ENCODE measurements at regions of chr7 and their contacts with region 1.

Region 1: DNA sequence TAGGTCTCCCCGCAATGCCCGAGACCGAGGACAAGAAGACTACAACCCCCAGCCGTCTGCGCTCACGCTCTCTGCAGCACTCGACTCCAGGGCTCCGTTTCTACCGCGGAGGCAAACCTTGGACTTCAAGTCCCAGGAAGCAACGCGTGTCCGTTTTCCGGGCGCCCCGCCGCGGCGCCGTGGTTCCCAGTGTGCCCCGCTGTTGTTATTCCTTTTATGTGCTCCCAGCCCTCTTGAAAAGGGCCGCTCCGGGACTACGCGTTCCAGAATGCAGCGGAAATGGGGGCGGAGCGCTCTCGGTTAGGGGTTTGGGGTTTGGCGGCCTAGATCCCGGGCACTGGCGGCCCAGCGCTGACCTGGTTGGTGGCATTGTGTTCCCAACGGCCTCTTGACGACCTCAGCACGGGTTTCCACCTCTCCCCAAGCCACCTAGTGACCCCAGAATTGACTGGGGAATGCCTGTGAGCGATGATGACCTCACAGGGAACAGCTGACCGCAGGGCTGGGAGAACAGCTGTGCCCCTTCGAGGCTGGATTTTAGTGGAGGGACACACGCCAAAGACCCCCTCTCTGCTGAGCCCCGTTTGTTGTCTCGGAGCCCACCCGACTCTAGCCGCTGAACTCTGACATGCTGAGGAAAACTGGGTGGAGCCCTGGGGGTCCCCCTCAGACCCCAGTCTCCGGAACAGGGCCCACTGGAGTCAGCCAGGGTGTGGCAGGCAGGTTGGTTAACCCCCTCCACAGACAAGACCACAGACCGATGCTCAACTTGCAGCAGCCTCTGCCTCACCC is 488 bp upstream of the CDK5 start:
- DNase-seq: peak; percentile 99
- H3K4me3 Mint-ChIP-seq: peak overlapping the region; percentile 99
- H3K27ac Mint-ChIP-seq: peak overlapping the region; percentile 88
- H3K4me1 Mint-ChIP-seq: peaks cover 38% of the 10 kb centered on the region
- H3K27me3 Mint-ChIP-seq: no peaks in the 10 kb centered on the region

Region 2: DNA sequence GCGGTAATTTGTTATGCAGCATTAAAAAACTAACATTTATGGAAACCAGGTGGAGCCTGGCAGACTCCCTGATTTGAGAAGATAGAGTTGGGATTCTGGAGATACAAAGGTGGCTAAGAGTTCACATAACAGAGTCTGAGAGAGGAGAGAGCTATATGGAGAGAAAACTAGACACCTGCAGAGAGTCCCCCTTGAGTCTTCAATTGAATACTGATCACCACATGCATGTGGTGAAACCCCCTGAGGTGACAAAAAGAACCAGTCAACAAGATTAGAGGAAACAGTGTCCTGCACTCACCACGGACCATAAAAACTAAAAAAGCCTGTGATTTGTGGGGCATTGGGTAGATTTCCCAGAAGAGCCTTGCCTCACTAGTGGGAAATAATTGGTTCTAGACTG is 362.5 kb before region 1 on chr7:
- intact Hi-C with region 1: no loop called
- DNase-seq: no peak
- H3K4me3 Mint-ChIP-seq: no peak overlapping the region
- H3K27ac Mint-ChIP-seq: no peak overlapping the region
- H3K4me1 Mint-ChIP-seq: peaks cover 14% of the 10 kb centered on the region
- H3K27me3 Mint-ChIP-seq: no peaks in the 10 kb centered on the region

Region 3: GRCh38 chr7:151008511-151009323 is 49.5 kb before region 1 on chr7:
- intact Hi-C with region 1: loop called (anchors 2 kb)
- DNase-seq: peak; percentile 92
- H3K4me3 Mint-ChIP-seq: peak overlapping the region; percentile 84
- H3K27ac Mint-ChIP-seq: peak overlapping the region; percentile 90
- H3K4me1 Mint-ChIP-seq: peaks cover 46% of the 10 kb centered on the region
- H3K27me3 Mint-ChIP-seq: no peaks in the 10 kb centered on the region

Region 4: GRCh38 chr7:151017953-151018420 is 40.2 kb before region 1 on chr7:
- intact Hi-C with region 1: loop called (anchors 2 kb)
- DNase-seq: peak; percentile 95
- H3K4me3 Mint-ChIP-seq: peak overlapping the region; percentile 86
- H3K27ac Mint-ChIP-seq: peak overlapping the region; percentile 93
- H3K4me1 Mint-ChIP-seq: peaks cover 43% of the 10 kb centered on the region
- H3K27me3 Mint-ChIP-seq: peaks cover 27% of the 10 kb centered on the region

Region 5: GRCh38 chr7:151028131-151028947 is 29.8 kb before region 1 on chr7 and contains the start of gene ABCB8:
- intact Hi-C with region 1: loop called (anchors 1 kb)
- DNase-seq: peak; percentile 100
- H3K4me3 Mint-ChIP-seq: peak within 1 kb of the TSS; percentile 97
- H3K27ac Mint-ChIP-seq: peak within 1 kb of the TSS; percentile 97
- H3K4me1 Mint-ChIP-seq: peaks cover 24% of the 10 kb centered on the region
- H3K27me3 Mint-ChIP-seq: peaks cover 2% of the 10 kb centered on the region
- total RNA-seq, gene ABCB8: 56.4 and 57.4 TPM in 2 replicates

Region 6: DNA sequence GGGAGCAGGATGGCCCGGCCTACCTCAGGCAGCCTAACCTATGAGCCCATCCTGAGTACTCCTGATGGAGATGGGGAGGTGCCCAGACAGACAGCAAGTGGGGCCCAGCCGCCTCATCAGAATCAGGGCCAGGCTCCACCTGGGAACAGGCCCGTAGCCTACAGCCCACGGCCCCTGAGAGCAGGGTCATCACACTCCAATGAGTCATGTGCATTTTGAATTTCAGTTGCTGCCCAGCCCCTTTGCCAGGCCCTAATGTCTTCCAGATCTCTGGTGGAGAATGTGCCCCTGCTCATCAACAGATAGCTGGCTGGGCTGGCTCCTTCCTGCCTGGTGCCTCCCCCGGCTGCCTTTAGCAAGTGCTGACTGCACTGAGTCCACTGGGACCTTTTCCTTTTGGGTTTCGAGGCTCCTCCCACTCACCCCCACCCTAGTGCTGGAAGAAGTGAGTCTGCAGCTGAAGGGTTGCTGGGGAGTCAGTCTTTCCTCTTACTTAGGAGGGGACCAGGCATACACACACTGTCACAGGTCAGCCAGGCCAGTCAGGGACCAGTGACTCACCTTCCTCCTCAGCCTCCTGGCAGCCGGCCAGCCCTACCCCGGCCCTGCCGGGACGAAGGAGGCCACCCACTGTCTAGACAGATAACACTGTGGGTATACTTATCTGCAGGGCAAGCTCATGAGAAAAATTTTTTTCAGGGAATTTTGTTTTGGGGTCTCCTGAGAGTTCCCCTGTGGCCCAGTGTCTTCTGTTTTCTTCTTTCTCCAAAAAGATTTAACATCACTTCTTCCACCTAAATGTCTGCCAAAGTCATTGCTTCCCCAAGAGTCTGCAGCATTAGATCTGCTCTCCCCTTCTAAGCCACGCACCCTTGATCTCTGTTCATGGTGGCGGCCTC is 19.0 kb before region 1 on chr7:
- intact Hi-C with region 1: loop called (anchors 1 kb)
- DNase-seq: peak; percentile 76
- H3K4me3 Mint-ChIP-seq: peak overlapping the region; percentile 56
- H3K27ac Mint-ChIP-seq: peak overlapping the region; percentile 92
- H3K4me1 Mint-ChIP-seq: peaks cover 17% of the 10 kb centered on the region
- H3K27me3 Mint-ChIP-seq: no peaks in the 10 kb centered on the region

Region 7: DNA sequence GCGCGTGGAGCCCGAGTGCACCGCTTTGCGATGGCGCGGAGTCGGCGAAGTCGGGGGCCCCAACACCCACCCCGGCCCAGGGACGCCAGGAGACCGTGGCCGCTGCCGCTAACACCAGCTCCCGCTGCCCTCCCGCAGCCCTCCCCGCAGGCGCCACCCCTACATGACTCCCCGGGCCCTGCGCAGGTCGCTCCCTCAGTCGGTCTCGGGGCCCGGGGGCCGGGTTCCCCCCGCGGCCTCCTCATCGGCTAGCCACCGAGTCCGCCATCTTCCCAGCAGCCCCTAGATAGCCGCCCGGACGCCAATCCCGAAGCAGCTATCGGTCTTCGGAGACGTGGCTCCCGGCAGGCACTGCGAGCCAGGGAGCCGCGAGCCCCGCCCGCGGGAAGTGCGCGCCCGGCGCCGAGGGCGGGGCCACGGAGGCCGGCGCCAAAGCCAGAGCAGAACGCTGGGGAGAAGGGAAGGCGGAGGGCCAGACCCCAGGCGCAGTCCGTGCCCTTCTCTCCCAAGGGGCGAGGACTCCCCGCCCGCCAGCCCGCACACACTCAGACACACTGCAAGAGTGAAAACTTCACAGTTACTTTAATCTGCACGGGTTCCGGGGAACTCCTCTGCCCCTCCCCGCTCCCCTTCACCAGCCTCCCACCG is 22.5 kb after region 1 on chr7 and contains the start of gene FASTK:
- intact Hi-C with region 1: loop called (anchors 1 kb)
- DNase-seq: peak; percentile 97
- H3K4me3 Mint-ChIP-seq: peak within 1 kb of the TSS; percentile 95
- H3K27ac Mint-ChIP-seq: peak within 1 kb of the TSS; percentile 82
- H3K4me1 Mint-ChIP-seq: peaks cover 30% of the 10 kb centered on the region
- H3K27me3 Mint-ChIP-seq: peaks cover 9% of the 10 kb centered on the region
- total RNA-seq, gene FASTK: 90.8 and 92.3 TPM in 2 replicates

Region 8: DNA sequence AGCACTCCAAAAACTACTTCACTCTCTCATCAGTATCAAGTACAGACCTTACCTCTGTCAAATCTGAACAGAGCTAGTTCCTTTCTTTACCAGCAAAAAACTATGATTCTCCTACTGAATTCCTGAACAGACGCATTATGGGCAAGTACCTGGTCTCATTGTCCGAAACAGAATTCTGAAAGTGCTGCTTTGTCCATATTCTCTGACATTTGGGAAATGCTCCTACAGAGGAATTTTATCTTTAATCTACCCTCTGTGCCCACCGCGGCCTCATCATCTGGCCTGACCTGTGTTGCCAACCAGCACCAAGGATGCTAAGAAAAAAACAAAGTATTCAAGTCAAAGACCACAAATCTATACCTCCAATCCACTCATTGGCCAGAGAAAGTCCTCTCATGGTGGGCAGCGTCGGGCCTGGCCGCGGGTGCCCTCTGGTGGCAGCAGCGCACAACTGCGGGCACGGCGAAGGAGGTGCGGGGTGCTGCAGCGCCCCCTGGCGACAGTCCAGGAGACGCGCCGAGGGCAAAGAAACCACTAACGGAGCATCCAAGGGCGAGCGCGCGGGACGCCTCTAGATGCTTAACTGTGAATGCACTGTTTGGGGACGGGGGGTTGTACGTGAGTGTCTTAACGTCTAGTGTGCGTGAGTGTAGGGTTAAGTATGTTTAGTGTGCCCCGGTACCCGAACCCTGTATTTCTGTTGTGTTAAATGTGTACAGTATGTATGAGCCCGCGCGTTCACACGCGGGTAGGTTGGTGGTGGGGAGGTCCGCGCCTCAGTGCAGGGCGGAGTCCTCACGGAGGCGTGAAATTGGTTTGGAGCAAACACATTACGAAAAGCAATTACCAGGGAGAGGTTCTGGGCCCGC is 114.3 kb after region 1 on chr7:
- intact Hi-C with region 1: no loop called
- DNase-seq: peak; percentile 95
- H3K4me3 Mint-ChIP-seq: no peak overlapping the region
- H3K27ac Mint-ChIP-seq: peak overlapping the region; percentile 13
- H3K4me1 Mint-ChIP-seq: peaks cover 12% of the 10 kb centered on the region
- H3K27me3 Mint-ChIP-seq: peaks cover 54% of the 10 kb centered on the region

Region 9: DNA sequence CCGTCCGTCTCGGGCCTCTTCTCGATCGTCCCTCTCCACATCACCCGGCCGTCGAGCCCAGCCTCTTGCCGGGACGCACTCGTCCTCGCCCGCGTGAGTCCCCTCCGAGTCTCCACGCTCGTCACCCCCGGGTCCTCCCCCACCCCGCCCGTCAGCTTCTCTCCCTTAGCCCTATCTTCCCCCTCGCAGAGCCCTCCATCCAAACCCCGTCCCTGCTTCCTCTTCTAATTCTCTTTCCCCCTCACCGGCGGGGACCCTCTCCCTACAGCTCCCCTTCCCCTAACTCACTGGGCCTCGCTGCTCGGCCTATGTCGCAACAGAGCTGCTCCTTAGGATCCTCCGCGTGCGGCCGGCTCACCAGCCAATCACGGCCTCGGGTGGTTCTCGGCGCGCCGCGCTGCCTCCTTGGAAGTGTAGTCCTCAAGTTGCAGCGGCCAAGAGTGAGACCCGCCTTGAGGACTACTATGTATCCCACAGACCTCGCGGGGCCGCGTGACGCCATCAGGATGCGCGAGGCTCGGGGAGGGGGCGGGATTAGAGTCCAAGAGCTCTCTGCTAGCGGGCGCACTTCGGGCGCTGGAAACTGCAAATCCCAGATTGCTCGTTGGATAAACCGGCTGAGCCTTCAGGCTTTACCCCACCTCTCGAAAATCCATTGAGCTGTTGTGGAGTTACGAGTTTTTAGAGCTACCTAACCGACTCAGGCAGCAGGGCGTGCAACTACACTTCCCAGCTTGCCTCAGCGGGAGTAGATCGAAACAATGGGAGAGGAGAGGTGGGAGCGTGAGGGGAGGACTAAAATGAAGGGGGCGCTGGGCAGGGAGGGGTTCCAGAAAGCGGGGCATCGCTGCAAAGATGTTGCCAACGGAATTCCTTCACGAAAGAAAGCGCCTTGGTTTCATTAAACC is 168.9 kb after region 1 on chr7 and contains the start of gene ABCF2:
- intact Hi-C with region 1: loop called (anchors 1 kb)
- DNase-seq: peak; percentile 99
- H3K4me3 Mint-ChIP-seq: peak within 1 kb of the TSS; percentile 97
- H3K27ac Mint-ChIP-seq: peak within 1 kb of the TSS; percentile 96
- H3K4me1 Mint-ChIP-seq: peaks cover 36% of the 10 kb centered on the region
- H3K27me3 Mint-ChIP-seq: peaks cover 6% of the 10 kb centered on the region
- total RNA-seq, gene ABCF2: 84.6 and 90.3 TPM in 2 replicates

Region 10: GRCh38 chr7:151276666-151277590 is 218.7 kb after region 1 on chr7:
- intact Hi-C with region 1: no loop called
- DNase-seq: peak; percentile 87
- H3K4me3 Mint-ChIP-seq: peak overlapping the region; percentile 73
- H3K27ac Mint-ChIP-seq: peak overlapping the region; percentile 69
- H3K4me1 Mint-ChIP-seq: peaks cover 17% of the 10 kb centered on the region
- H3K27me3 Mint-ChIP-seq: peaks cover 19% of the 10 kb centered on the region

Region 11: GRCh38 chr7:151310578-151310977 is 252.4 kb after region 1 on chr7:
- intact Hi-C with region 1: no loop called
- DNase-seq: no peak
- H3K4me3 Mint-ChIP-seq: no peak overlapping the region
- H3K27ac Mint-ChIP-seq: no peak overlapping the region
- H3K4me1 Mint-ChIP-seq: peaks cover 14% of the 10 kb centered on the region
- H3K27me3 Mint-ChIP-seq: peaks cover 4% of the 10 kb centered on the region

Measured in activated CD4-positive, alpha-beta T cell treated with anti-CD3 and anti-CD28 coated beads, Interleukin-2, amount 10 ng/mL, durations not matched to agents 24 days and 14 days (primary cell).